ACHN (cell line): ENCODE measurements at regions of chrX and their contacts with region 1.

Region 1: DNA sequence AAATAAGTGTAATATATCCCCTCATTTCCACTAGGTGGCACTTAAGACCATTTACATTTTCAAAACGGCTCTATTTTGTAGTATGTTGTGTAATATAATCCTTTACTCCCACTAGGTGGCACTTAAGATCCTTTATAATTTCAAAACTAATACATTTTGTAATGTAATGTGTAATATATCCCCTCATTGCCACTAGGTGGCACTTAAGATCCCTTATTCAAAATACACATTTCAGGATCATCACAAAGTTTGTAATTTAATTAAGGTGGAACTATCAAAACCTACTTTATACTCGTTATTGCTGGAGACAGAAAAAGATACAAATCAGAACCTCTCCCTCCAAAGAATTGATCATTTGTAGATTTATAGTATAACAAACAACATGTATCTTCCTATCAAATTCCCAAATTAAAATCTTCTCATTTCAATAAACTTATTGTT is 132.5 kb downstream of the ARHGAP6 start:
- DNase-seq: peak; percentile 72

Region 2: DNA sequence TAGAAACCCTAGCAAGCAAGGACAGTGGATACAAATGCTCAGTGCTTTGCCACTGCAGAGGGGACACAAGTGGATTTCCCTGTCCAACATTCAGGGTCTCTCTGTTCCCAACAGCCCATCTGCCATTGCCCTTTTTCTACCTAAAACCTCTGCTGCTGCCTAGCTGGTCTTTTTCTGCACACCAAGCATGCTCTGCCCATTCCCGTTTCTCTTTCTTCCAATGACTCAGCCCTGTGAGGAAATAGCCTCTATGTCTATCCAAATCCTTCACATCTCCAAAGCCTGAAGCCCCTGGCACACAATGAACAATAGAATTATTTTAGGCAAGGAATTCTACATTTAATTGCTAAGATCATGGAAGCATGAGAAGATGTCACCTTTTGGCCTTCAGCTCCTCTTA is 245.7 kb before region 1 on chrX:
- in situ Hi-C with region 1: no loop called
- DNase-seq: no peak

Region 3: DNA sequence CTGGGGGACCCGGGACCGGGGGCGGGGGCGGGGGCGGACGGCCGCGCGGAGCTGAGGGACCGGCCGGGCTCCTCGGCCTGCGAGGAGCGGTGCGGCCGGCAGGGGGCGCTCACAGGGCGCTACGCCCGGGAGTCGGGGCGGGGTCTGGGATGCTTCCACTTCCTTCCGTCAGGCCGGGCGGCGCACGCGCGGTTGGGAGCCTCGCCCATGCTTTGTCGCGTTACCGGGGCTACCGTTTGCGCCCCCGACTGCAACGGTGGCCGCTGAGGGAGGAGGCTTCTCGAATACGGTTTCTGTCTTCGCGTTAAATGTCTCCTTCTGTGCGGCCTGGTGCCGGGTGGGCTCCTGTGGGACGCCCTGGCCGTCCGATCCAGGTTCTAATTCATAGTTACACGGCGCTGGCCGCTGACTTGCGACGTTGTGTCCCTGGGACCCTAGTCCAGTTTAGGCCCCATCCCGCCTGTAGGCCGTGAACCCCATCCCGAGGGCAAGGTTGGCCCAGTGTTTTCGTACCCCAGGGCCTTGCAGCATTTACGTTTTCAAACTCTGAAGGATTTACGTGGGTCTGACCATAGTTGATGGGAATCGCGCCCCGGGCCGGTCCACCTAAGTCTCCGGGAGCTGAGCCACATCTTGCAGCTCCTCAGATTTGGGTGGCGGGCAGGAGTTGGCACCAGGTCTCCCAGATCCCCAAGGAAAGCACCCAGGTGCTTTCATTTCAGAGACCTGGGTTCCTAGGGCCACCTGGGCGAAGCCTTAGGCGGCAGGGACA is 225.4 kb after region 1 on chrX:
- in situ Hi-C with region 1: loop called (anchors 25 kb)
- DNase-seq: peak; percentile 73